Activated CD4-positive, alpha-beta T cell treated with anti-CD3 and anti-CD28 coated beads, Interleukin-2, amount 10 ng/mL, durations not matched to agents 7 days and 5 days (primary cell): ENCODE measurements at regions of chr1 and their contacts with region 1.

Region 1: GRCh38 chr1:9701661-9702060 is 50.1 kb downstream of the PIK3CD start:
- DNase-seq: no peak
- H3K4me3 Mint-ChIP-seq: no peak overlapping the region
- H3K27ac Mint-ChIP-seq: no peak overlapping the region
- H3K4me1 Mint-ChIP-seq: peaks cover 70% of the 10 kb centered on the region
- H3K27me3 Mint-ChIP-seq: no peaks in the 10 kb centered on the region

Region 2: DNA sequence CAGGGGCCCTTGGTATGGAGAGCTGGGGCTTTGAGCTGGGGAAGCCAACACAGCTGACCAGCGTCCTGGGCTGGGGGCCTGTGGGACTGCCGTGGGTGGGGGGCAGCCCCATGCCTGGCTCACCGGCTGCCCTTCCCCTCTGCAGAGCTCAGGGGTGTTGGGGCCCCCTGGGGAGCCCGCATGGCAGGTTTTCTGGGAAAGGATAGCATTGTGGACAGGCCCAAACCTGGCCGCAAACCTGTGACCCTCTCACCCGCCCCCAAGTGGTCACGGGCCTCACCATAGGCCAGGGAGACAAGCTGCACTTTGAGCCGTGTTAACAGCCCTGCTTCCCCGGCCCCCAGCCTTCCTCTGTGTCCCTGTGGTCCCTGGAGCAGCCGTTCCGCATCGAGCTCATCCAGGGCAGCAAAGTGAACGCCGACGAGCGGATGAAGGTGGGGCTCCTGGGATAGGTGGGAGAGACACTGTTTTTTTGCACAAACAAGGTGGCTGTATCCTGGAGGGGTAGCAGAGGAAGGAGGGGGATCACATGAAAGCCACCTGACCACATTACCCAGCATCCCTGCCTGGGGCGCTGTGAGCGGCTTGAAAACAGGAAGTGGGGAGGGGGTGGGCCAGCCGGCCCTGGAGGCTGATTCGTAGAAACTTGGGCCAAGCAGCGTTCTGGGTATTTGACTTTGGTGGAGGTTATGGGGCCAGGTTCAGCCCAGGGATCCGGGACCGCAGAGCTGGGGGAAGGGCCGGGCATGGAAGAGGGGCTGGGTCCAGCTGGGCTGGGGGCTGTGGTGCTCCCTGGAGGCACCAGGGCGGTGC is 15.7 kb after region 1 on chr1:
- CTCF ChIA-PET with region 1: interaction called, 17 read pairs
- POLR2A ChIA-PET with region 1: no interaction called
- DNase-seq: peak; percentile 97
- H3K4me3 Mint-ChIP-seq: peak overlapping the region; percentile 79
- H3K27ac Mint-ChIP-seq: peak overlapping the region; percentile 97
- H3K4me1 Mint-ChIP-seq: peaks cover 78% of the 10 kb centered on the region
- H3K27me3 Mint-ChIP-seq: no peaks in the 10 kb centered on the region

Region 3: DNA sequence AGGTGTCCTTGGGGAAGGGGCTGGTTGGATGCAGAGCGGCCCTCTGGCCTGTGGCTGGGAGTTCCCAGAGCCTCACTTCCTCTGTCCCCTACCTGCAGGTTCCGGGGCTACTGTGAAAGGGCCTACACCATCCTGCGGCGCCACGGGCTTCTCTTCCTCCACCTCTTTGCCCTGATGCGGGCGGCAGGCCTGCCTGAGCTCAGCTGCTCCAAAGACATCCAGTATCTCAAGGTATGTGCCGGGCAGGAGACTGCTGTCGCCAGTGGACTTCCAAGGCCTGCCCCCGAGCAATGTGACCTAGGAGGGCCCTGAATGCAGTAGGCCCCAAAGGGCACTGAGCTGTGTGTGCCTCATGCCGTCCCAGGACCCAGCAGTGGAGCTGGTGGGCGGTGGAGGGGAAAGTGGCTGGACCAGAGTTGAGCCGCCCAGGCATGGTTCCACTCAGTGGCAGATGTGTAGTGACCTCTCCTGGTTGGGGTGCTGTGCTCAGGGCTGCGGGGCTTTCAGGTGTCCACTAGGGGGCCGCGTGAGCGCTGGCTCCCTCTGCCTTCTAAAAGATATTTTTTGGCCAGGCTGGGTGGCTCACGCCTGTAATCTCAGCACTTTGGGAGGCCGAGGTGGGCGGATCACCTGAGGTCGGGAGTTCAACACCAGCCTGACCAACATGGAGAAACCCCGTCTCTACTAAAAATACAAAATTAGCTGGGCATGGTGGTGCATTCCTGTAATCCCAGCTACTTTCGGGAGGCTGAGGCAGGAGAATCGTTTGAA is 23.2 kb after region 1 on chr1:
- CTCF ChIA-PET with region 1: interaction called, 17 read pairs
- POLR2A ChIA-PET with region 1: no interaction called
- DNase-seq: peak; percentile 74
- H3K4me3 Mint-ChIP-seq: no peak overlapping the region
- H3K27ac Mint-ChIP-seq: peak overlapping the region; percentile 71
- H3K4me1 Mint-ChIP-seq: peaks cover 71% of the 10 kb centered on the region
- H3K27me3 Mint-ChIP-seq: no peaks in the 10 kb centered on the region

Region 4: DNA sequence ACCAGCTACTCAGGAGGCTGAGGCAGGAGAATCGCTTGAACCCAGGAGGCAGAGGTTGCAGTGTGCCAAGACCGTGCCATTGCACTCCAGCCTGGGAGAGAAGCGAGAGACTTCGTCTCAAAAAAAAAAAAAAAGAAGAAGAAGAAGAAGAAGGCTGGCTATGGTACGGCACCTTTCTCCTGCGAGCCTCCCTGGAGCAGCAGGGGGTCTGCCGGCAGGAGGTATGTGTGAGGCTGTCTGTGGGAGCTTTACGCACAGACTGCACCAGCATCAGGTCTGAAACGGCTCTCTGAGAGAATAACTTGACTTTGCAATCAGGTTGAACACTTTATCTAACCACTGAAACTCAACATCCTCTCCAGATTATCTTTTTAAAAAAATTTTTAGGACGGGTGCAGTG is 77.2 kb after region 1 on chr1:
- CTCF ChIA-PET with region 1: no interaction called
- POLR2A ChIA-PET with region 1: no interaction called
- DNase-seq: no peak
- H3K4me3 Mint-ChIP-seq: no peak overlapping the region
- H3K27ac Mint-ChIP-seq: no peak overlapping the region
- H3K4me1 Mint-ChIP-seq: peaks cover 22% of the 10 kb centered on the region
- H3K27me3 Mint-ChIP-seq: no peaks in the 10 kb centered on the region